PC-3 (cell line): ENCODE measurements at regions of chr1 and their contacts with region 1.

Region 1: DNA sequence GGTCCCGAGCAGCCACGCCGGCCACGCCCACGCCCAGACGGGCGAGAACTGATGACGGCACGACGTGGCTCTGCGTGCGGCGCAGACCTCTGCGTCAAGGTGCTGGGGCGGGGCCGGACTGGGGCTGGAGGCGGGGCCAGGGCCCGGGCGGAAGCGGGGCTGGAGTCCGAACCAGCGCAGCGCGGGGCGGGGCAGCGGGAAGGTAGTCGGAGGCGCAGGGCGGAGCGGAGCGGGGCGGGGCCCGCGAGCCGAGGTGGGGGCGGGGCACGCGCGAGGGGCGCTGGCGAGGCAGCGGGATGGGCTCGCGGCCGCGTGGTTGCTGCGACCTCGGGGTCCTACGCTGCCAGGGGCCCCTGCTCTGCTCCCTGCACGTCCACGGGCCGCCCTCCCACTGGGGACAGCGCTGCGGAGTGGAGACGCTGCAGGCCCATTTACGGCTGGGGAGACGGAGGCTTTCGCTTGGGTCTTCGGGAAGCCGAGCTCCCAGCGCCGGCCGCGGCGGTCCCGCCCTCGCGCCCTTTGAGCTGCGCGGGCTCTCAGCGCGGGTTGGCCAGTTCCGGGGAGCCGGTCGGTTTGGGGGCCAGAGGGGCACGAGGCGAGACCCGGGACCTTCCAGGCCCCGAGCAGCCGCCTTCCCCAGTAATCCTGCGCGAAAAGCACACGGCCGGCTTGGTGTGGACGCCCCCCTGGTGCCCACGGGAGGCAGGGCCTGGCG is at the start of gene PEX10:
- DNase-seq: peak; percentile 99
- ATAC-seq: peak; percentile 75
- H3K4me3 ChIP-seq: peak within 1 kb of the TSS; percentile 84
- H3K27ac ChIP-seq: peak within 1 kb of the TSS; percentile 71
- H3K4me1 ChIP-seq: peaks cover 45% of the 10 kb centered on the region
- H3K27me3 ChIP-seq: no peaks in the 10 kb centered on the region
- CTCF ChIP-seq: no peak
- total RNA-seq, gene PEX10: 97.8 and 100 TPM in 2 replicates

Region 2: DNA sequence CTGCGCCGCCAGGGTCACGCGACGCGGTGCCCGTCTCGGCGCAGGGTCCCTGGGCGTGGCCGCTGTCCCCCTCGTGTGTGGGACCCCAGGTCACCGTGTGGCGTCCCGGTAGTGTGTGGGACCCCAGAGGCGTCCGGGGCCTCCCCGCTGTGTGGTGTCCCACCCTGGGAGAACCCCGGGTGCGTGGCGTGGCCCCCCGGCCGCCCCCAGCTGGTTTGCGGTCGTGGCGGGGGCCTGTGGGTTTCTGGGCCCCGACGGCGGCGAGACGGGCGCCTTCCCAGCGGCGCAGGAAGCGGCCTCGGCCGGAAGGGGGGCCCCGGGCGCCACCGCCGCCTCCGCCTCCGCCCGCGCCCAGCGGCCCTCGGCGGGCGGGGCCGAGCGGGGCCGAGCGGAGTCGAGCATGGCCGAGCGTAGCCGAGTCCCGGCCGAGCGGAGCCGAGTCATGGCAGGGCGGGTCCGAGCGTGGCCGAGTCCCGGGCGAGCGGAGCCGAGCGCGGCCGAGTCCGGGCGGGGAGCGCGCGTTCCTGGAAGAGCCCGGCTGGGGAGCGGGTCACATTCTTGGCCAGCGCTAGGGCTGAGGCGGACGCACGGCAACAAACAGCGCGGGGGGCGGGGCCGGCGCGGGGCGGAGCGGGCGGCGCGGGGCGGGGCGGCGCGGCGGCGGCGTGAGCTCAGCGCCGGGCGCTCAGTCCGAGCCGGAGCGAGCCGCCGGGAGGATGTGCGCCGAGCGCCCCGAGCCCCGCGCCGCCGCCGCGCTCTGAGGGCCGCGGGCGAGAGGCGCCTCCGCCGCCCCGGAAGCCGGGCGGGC is 185.1 kb before region 1 on chr1:
- CTCF ChIA-PET with region 1: no interaction called
- POLR2A ChIA-PET with region 1: no interaction called
- intact Hi-C with region 1: no loop called
- DNase-seq: peak; percentile 99
- ATAC-seq: peak; percentile 85
- H3K4me3 ChIP-seq: peak overlapping the region; percentile 79
- H3K27ac ChIP-seq: peak overlapping the region; percentile 60
- H3K4me1 ChIP-seq: peaks cover 20% of the 10 kb centered on the region
- H3K27me3 ChIP-seq: no peaks in the 10 kb centered on the region
- CTCF ChIP-seq: no peak

Region 3: GRCh38 chr1:2391041-2391930 is 21.4 kb before region 1 on chr1 and contains the starts of genes MORN1 and RER1:
- CTCF ChIA-PET with region 1: interaction called, 6 read pairs
- POLR2A ChIA-PET with region 1: no interaction called
- intact Hi-C with region 1: loop called (anchors 1 kb)
- DNase-seq: peak; percentile 100
- ATAC-seq: peak; percentile 94
- H3K4me3 ChIP-seq: peak within 1 kb of the TSS; percentile 93
- H3K27ac ChIP-seq: peak within 1 kb of the TSS; percentile 38
- H3K4me1 ChIP-seq: peaks cover 22% of the 10 kb centered on the region
- H3K27me3 ChIP-seq: no peaks in the 10 kb centered on the region
- CTCF ChIP-seq: no peak
- total RNA-seq, gene MORN1: 11.2 and 30.5 TPM in 2 replicates
- total RNA-seq, gene RER1: 160 TPM in 2 replicates

Region 4: GRCh38 chr1:2494323-2494693 is 81.6 kb after region 1 on chr1:
- CTCF ChIA-PET with region 1: interaction called, 4 read pairs
- POLR2A ChIA-PET with region 1: no interaction called
- intact Hi-C with region 1: loop called (anchors 1 kb)
- DNase-seq: peak; percentile 99
- ATAC-seq: peak; percentile 83
- H3K4me3 ChIP-seq: peak overlapping the region; percentile 8; the same call in 1 of the 2 replicates
- H3K27ac ChIP-seq: peak overlapping the region; percentile 66
- H3K4me1 ChIP-seq: peaks cover 22% of the 10 kb centered on the region
- H3K27me3 ChIP-seq: no peaks in the 10 kb centered on the region
- CTCF ChIP-seq: no peak

Region 5: GRCh38 chr1:2545759-2546514 is 133.3 kb after region 1 on chr1:
- CTCF ChIA-PET with region 1: interaction called, 4 read pairs
- POLR2A ChIA-PET with region 1: no interaction called
- intact Hi-C with region 1: loop called (anchors 1 kb)
- DNase-seq: peak; percentile 95
- ATAC-seq: peak; percentile 64
- H3K4me3 ChIP-seq: peak overlapping the region; percentile 69
- H3K27ac ChIP-seq: peak overlapping the region; percentile 64
- H3K4me1 ChIP-seq: peaks cover 22% of the 10 kb centered on the region
- H3K27me3 ChIP-seq: no peaks in the 10 kb centered on the region
- CTCF ChIP-seq: no peak

Region 6: DNA sequence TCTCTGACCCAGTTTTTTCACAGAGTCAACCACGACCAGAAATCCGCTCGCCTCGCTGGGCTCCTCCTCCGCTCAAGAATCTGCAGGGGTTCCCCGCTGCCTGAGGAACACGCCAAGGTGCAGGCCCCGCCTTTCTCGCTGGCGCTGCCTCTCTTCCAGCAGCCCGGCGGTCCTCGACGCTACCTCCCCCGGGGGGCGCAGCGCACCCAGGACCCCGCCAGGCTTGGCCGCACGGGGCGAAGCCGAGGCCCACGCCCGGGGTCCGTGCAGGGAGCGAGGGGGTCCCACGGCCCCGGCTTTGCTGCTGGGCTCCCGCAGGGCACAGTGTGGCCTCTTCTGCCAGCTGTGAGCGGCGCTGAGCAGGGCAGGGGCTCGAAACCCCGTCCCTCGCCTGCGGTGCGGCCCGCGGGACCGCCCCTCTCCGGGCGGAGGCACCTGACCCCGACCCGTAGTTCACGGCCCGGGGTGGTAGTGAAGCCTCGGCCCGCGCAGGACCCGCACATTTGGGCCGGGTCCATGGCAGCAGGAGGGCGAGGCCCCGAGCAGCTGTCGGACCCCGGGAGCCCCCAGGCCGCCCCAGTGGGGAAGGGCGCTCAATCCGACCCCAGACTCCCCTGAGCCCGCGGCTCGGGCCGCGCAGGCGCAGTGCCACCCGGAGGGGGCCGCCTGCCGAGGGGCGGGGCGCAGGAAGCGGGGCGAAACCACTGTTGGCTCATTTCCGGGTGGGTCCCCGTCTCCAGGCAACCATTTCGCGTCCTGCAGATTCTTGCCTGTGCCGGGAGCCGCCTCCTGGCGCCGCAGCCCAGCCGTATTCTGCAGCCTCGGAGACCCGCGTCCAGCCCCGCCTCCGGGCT is 230.1 kb after region 1 on chr1:
- CTCF ChIA-PET with region 1: no interaction called
- POLR2A ChIA-PET with region 1: no interaction called
- intact Hi-C with region 1: loop called (anchors 10 kb)
- DNase-seq: peak; percentile 96
- ATAC-seq: peak; percentile 84
- H3K4me3 ChIP-seq: peak overlapping the region; percentile 89
- H3K27ac ChIP-seq: 0 out of 2 replicates have a peak overlapping the region, but pooled peaks have one; percentile 13
- H3K4me1 ChIP-seq: peaks cover 8% of the 10 kb centered on the region
- H3K27me3 ChIP-seq: peaks cover 15% of the 10 kb centered on the region
- CTCF ChIP-seq: no peak

Region 7: DNA sequence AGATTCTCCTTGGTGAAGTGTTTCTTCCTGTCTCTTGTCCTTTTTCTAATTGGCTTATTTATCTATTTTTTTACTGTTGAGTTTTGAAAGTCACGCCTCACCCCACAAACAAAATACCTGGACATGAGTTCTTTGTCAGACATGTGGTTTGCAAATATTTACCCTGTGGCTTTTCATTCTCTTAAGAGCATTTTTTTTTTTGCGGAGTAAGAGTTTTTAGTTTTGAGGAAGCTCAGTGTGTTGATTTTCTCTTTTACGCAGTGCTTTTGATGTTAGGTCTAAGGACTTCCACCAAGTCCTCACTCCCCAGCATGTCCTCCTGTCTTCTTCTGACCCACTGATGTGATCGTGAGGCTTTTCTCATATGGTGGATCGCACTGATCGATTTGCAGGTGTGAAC is 1452.2 kb after region 1 on chr1:
- CTCF ChIA-PET with region 1: no interaction called
- POLR2A ChIA-PET with region 1: interaction called, 18 read pairs
- intact Hi-C with region 1: no loop called
- DNase-seq: peak; percentile 74
- ATAC-seq: peak; percentile 78
- H3K4me3 ChIP-seq: no peak overlapping the region
- H3K27ac ChIP-seq: no peak overlapping the region
- H3K4me1 ChIP-seq: peaks cover 12% of the 10 kb centered on the region
- H3K27me3 ChIP-seq: no peaks in the 10 kb centered on the region
- CTCF ChIP-seq: no peak